Dorsolateral prefrontal cortex (tissue), 120 donors: ENCODE measurements at regions of chr7 and their contacts with region 1.

Region 1: GRCh38 chr7:51162724-51163329 is 153.8 kb downstream of the COBL start:
- DNase-seq: peak in 9 of 10 donors; percentile 68 to 97 (median 83)
- H3K4me3 ChIP-seq: peak overlapping the region in 2 of 59 donors; percentile 2 to 9
- H3K27ac ChIP-seq: peak overlapping the region in 55 of 59 donors; percentile 3 to 97 (median 57)
- H3K27me3 ChIP-seq: no peaks in the 10 kb centered on the region
- CTCF ChIP-seq: peak; percentile 69 to 97 (median 92)

Region 2: GRCh38 chr7:50206453-50207250 is 956.2 kb before region 1 on chr7:
- intact Hi-C with region 1: loop called in 1 of 2 experiments (anchors 5 kb)
- DNase-seq: no peak
- H3K4me3 ChIP-seq: no peak overlapping the region
- H3K27ac ChIP-seq: no peak overlapping the region
- H3K27me3 ChIP-seq: peaks cover 0 to 5% (median 0%) of the 10 kb centered on the region in 45 donors
- CTCF ChIP-seq: no peak

Region 3: DNA sequence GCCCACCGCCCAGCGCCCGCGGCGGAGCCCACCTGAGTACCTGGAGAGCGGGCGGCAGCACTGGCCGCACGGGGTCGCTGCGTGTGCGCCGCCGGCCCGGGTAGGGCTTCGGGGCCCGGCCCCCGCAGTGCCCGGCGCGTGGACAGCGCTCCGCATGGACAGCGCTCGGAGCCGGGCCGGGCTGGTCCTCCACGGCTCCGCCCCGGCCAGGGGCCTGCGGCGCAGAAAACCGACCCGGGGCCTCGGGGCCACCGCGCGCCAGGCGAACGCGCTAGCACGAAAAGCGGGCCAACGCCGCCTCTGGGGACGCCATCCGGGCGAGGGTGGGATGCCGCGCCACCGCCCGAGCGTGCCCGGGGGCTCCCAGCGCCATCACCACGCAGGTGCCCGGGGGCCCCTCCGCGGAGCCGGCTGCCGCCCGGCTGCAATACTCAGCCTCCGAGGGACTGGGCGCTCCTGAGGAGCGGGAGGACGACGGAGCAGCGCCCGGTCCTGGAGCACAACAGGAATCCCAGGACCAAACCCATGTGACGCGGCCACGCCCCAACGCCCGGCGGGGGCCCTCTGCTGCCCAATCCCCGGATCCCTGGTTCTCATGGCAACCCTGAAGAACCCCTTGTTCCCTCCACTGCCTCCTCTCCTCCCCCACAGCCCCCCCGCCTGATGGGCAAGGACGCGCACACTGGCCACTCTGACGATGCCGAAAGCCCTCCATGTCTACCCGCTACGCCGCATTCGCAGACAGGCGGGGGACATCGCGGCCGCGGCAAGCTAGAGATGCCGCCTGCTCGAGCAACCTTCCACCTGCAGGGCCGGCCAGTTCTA is 380.2 kb before region 1 on chr7 and contains the start of gene GRB10:
- intact Hi-C with region 1: loop called (anchors 5 kb)
- DNase-seq: peak; percentile 77 to 91 (median 87)
- H3K4me3 ChIP-seq: peak within 1 kb of the TSS; percentile 34 to 78 (median 64)
- H3K27ac ChIP-seq: peak within 1 kb of the TSS in 57 of 59 donors; percentile 54 to 92 (median 84)
- H3K27me3 ChIP-seq: peaks cover 0 to 8% (median 0%) of the 10 kb centered on the region in 45 donors
- CTCF ChIP-seq: peak in 32 of 56 donors; percentile 2 to 67 (median 28)
- total RNA-seq, gene GRB10: 74.7 to 208 (median 113) TPM

Region 4: GRCh38 chr7:51315393-51316261 is 152.8 kb after region 1 on chr7:
- intact Hi-C with region 1: loop called in 1 of 2 experiments (anchors 5 kb)
- DNase-seq: peak in 6 of 10 donors; percentile 59 to 80 (median 72)
- H3K4me3 ChIP-seq: peak overlapping the region; percentile 62 to 92 (median 79)
- H3K27ac ChIP-seq: peak overlapping the region; percentile 62 to 100 (median 98)
- H3K27me3 ChIP-seq: no peaks in the 10 kb centered on the region
- CTCF ChIP-seq: peak in 1 of 56 donors; percentile 10

Region 5: GRCh38 chr7:51366930-51367613 is 204.2 kb after region 1 on chr7:
- intact Hi-C with region 1: loop called (anchors 2 kb)
- DNase-seq: peak in 7 of 10 donors; percentile 41 to 66 (median 56)
- H3K4me3 ChIP-seq: no peak overlapping the region
- H3K27ac ChIP-seq: peak overlapping the region in 5 of 59 donors; percentile 2 to 39 (median 16)
- H3K27me3 ChIP-seq: no peaks in the 10 kb centered on the region
- CTCF ChIP-seq: peak; percentile 63 to 93 (median 84)